Mammary epithelial cell (primary cell): ENCODE measurements at regions of chr9 and their contacts with region 1.

Region 1: DNA sequence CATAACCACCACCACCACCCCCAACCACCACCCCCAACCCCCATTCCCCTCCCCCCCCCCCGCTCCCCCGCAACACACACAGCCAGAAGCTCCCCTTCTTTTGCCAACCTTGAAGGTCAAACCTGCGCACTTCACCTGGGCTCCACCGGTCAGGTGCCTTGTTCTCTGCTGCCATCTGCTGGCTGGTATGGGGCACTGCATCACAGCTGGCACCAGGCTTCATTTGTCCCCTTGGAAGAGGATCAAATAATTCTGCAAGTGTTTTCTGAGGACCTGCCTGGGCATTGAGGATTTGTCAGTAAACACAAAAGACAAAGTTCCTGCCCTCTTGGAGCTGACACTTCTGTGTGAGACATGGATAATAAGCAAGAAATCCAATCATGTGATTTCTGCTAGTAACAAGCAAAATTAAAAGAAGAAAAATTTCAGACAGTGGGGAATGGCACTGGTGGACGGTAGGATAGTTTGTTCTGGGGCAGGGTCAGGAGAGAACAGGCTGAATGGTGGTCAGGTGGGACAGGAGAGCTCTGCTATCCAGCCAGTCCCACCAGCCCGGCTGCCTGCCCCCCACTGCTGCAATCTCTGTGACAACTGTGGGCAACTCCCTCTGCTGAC is 55.6 kb upstream of the LMX1B start:
- DNase-seq: peak; percentile 30
- H3K4me3 ChIP-seq: no peak overlapping the region
- H3K27ac ChIP-seq: no peak overlapping the region
- H3K4me1 ChIP-seq: no peaks in the 10 kb centered on the region
- H3K27me3 ChIP-seq: no peaks in the 10 kb centered on the region
- CTCF ChIP-seq: peak; percentile 99

Region 2: GRCh38 chr9:125655691-125656410 is 902.3 kb before region 1 on chr9:
- CTCF ChIA-PET with region 1: interaction called, 12 read pairs
- dilution Hi-C with region 1: no loop called
- in situ Hi-C with region 1: no loop called
- intact Hi-C with region 1: no loop called
- DNase-seq: no peak
- H3K4me3 ChIP-seq: no peak overlapping the region
- H3K27ac ChIP-seq: no peak overlapping the region
- H3K4me1 ChIP-seq: peaks cover 3% of the 10 kb centered on the region
- H3K27me3 ChIP-seq: no peaks in the 10 kb centered on the region
- CTCF ChIP-seq: no peak

Region 3: GRCh38 chr9:125997196-125997823 is 560.8 kb before region 1 on chr9:
- CTCF ChIA-PET with region 1: no interaction called
- dilution Hi-C with region 1: no loop called
- in situ Hi-C with region 1: no loop called
- intact Hi-C with region 1: no loop called
- DNase-seq: no peak
- H3K4me3 ChIP-seq: no peak overlapping the region
- H3K27ac ChIP-seq: no peak overlapping the region
- H3K4me1 ChIP-seq: no peaks in the 10 kb centered on the region
- H3K27me3 ChIP-seq: peaks cover 5% of the 10 kb centered on the region
- CTCF ChIP-seq: no peak

Region 4: DNA sequence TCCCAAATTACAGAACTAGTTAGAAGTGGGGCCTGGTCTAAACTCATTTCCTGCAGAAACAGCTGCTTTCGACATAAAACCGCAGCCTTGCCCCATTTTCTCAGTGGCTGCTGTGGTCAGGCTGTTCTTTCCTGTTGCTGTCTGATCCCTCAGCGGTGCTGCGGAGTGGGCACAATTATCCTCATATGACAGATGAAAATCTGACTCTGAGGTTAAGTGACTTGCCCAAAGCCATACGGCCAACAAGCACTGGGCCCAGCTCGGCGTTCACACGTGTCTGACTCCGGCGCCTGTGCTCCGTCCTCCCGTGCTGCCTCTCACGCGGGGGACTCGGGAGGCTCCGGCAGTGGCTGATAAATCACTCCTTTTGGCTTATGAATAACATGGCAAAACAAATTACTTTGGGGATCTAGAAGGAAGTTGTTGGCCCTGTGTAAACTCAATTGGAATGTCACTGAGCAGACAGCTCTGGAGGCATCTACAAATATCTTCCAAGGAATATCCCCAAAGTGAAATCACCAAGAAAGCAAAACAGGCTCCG is 87.0 kb before region 1 on chr9:
- CTCF ChIA-PET with region 1: interaction called, 22 read pairs
- dilution Hi-C with region 1: no loop called
- in situ Hi-C with region 1: no loop called
- intact Hi-C with region 1: no loop called
- DNase-seq: no peak
- H3K4me3 ChIP-seq: no peak overlapping the region
- H3K27ac ChIP-seq: no peak overlapping the region
- H3K4me1 ChIP-seq: no peaks in the 10 kb centered on the region
- H3K27me3 ChIP-seq: no peaks in the 10 kb centered on the region
- CTCF ChIP-seq: no peak

Region 5: DNA sequence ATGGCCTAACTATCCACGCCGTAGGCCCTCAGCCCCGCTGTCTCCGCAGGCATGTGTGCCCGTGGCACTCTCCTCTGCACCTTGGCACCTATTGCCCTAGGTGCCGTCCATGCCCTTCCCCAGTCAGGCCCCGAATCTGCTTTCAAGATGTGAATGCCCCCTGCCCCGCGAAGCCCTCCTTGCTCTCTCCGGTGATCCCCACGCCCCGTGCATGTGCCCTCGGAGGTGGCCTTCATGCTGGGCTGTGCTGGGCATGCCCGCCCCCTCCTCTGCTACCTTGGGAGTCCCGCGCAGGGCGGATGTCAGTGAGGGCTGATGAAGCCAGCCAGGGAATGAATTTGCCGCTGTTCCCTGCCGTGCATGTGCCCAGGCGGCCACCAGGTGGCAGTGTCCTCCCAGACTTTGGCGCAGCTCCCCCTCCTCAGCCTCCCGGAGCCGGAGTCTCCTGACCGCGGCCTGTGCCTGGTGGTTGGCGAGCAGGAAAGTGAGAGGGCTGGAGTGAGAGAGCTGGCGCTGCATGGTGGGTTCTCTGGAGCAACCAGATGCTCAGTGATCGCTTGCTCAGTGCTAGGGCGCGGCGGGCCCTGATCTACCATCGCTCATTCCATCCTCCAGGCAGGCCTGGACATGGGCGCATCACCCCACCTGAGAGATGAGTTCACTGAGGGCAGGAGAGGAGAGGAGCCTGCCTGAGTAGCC is 57.3 kb before region 1 on chr9:
- CTCF ChIA-PET with region 1: interaction called, 12 read pairs
- dilution Hi-C with region 1: no loop called
- in situ Hi-C with region 1: loop called (anchors 5 kb)
- intact Hi-C with region 1: loop called (anchors 1 kb)
- DNase-seq: peak; percentile 62
- H3K4me3 ChIP-seq: no peak overlapping the region
- H3K27ac ChIP-seq: no peak overlapping the region
- H3K4me1 ChIP-seq: peaks cover 21% of the 10 kb centered on the region
- H3K27me3 ChIP-seq: no peaks in the 10 kb centered on the region
- CTCF ChIP-seq: peak; percentile 88 to 96

Region 6: GRCh38 chr9:126516561-126516935 is 41.6 kb before region 1 on chr9:
- CTCF ChIA-PET with region 1: interaction called, 13 read pairs
- dilution Hi-C with region 1: no loop called
- in situ Hi-C with region 1: no loop called
- intact Hi-C with region 1: no loop called
- DNase-seq: no peak
- H3K4me3 ChIP-seq: peak overlapping the region in 1 of 3 experiments; percentile 47
- H3K27ac ChIP-seq: no peak overlapping the region
- H3K4me1 ChIP-seq: peaks cover 34% of the 10 kb centered on the region
- H3K27me3 ChIP-seq: no peaks in the 10 kb centered on the region
- CTCF ChIP-seq: no peak

Region 7: DNA sequence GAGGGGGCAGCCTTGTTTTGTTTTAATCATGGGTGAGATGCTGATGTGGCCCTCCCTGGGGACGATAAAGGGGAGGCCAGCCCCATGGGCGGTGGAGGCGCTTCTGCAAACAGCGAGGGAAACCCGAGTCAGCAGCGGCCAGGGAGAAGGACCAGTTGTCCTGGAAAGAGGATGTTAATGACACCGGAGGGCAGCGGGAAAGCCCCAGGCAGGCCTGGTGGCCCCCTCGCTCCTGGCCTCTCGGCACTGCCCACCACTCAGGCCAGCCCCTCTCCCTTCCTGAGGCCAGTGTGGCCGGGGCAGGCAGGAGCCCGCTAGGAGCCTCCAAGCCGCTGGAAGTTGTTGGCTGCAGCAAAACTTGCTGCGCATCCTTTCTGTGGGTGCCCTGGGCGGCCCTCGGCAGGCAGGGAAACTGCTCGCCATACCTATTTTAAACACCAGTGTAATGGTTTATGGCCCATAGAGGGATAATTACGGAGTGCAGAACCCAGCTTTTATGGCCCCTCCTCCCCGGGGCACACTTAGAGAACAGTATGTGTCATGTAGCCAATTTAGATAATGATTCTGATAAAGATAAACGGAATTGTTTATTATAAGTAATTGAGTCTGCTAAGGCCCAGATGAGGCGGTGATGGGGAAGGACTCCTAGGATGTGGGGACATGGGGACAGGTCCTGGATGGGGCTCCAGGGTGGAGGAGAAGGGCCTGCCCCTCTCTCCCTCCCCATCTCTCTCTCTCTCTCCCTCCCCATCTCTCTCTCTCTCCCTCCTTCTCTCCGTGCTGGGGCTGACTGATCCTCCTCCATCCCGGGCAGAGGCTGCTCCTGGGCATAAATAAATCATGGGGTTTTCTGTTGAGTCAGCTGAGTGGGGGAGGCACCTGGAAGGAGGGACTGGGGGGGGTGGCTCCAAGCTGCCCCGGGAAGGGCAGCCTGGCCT is 92.5 kb after region 1 on chr9:
- CTCF ChIA-PET with region 1: no interaction called
- dilution Hi-C with region 1: no loop called
- in situ Hi-C with region 1: no loop called
- intact Hi-C with region 1: no loop called
- DNase-seq: no peak
- H3K4me3 ChIP-seq: no peak overlapping the region
- H3K27ac ChIP-seq: no peak overlapping the region
- H3K4me1 ChIP-seq: peaks cover 11% of the 10 kb centered on the region
- H3K27me3 ChIP-seq: no peaks in the 10 kb centered on the region
- CTCF ChIP-seq: no peak

Region 8: DNA sequence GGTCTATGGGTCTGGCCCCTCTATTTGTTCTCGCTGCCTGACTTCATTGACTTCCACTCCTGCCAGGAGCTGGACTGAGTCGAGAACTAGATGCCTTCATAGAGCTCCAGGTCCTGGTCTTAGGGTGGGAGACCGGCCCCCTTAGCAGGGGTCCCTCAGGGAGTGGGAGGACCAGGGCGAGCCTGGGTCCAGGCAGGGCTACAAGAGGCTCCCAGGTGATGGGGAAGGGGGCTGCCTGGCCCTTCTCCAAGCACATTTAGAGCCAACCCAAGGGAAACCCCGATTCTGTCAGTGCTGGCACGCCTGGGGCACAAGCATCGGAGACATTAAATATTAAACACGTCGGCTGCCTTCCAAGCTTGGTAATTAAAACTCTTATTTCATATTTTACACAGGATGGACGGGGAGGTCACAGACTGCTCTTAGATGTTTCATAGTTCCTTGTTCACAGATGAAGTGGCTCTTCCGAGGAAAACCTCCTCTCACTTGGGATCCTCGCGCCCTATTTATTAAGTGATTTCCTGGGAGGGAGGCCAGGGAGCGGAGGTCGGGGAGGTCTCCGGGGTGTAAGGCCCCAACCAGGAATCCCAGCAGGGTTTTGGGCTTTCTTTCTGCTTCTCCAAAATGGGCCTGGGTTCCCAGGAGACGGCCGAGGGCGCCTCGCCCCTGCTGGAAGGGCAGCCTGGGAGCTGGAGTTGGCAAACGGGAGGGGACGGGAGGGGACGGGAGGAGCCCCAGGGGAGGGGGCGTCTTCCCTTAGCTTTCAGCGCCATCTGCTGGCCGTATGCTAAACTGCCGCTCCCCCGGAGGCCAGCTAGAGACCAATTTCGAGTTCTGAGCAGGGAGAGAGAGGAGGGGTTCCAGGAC is 223.3 kb after region 1 on chr9:
- CTCF ChIA-PET with region 1: no interaction called
- dilution Hi-C with region 1: no loop called
- in situ Hi-C with region 1: no loop called
- intact Hi-C with region 1: loop called (anchors 1 kb)
- DNase-seq: peak; percentile 65
- H3K4me3 ChIP-seq: peak overlapping the region in 1 of 3 experiments; percentile 23
- H3K27ac ChIP-seq: no peak overlapping the region
- H3K4me1 ChIP-seq: no peaks in the 10 kb centered on the region
- H3K27me3 ChIP-seq: no peaks in the 10 kb centered on the region
- CTCF ChIP-seq: peak; percentile 69 to 91